Mammary epithelial cell (primary cell): ENCODE measurements at regions of chr5 and their contacts with region 1.

Region 1: GRCh38 chr5:9467199-9468059 is 78.4 kb downstream of the SEMA5A start:
- DNase-seq: peak; percentile 89
- H3K4me3 ChIP-seq: peak overlapping the region in 1 of 3 experiments; percentile 17
- H3K27ac ChIP-seq: peak overlapping the region; percentile 82
- H3K4me1 ChIP-seq: peaks cover 32% of the 10 kb centered on the region
- H3K27me3 ChIP-seq: no peaks in the 10 kb centered on the region
- CTCF ChIP-seq: no peak

Region 2: GRCh38 chr5:9440517-9440916 is 26.9 kb before region 1 on chr5:
- CTCF ChIA-PET with region 1: no interaction called
- dilution Hi-C with region 1: no loop called
- in situ Hi-C with region 1: no loop called
- intact Hi-C with region 1: loop called (anchors 1 kb)
- DNase-seq: peak; percentile 64
- H3K4me3 ChIP-seq: no peak overlapping the region
- H3K27ac ChIP-seq: peak overlapping the region; percentile 15
- H3K4me1 ChIP-seq: peaks cover 34% of the 10 kb centered on the region
- H3K27me3 ChIP-seq: no peaks in the 10 kb centered on the region
- CTCF ChIP-seq: no peak

Region 3: DNA sequence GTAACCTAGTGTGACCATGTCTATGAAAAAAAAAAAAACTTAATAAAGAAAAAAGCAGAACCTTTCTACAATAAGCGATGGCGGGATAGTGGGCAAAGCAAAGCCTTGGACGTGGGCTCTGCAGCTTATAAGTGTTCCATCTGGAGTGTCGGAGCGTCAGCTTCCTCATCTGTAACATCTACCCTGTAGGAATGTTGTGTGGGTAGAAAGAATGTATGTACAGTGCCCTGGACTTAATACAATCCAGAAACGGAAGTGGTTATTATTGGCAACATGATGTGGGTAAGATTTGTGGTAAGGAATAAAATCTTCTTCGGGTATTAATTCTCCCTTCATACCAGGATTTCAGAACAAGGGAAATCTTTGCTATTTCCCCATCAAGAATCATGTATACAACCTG is 11.9 kb after region 1 on chr5:
- CTCF ChIA-PET with region 1: no interaction called
- dilution Hi-C with region 1: no loop called
- in situ Hi-C with region 1: no loop called
- intact Hi-C with region 1: no loop called
- DNase-seq: peak; percentile 84
- H3K4me3 ChIP-seq: no peak overlapping the region
- H3K27ac ChIP-seq: no peak overlapping the region
- H3K4me1 ChIP-seq: peaks cover 23% of the 10 kb centered on the region
- H3K27me3 ChIP-seq: no peaks in the 10 kb centered on the region
- CTCF ChIP-seq: no peak